ENCODE measurements at regions of chr16 and their contacts with region 1.

Region 1: GRCh38 chr16:58336332-58337089 is 41.7 kb upstream of the PRSS54 start:
- DNase-seq: peak; percentile 67 to 90 (median 81)
- ATAC-seq: peak; percentile 84
- H3K4me3 ChIP-seq: no peak overlapping the region
- H3K4me3 Mint-ChIP-seq: peak overlapping the region; percentile 52
- H3K27ac ChIP-seq: no peak overlapping the region
- H3K27ac Mint-ChIP-seq: no peak overlapping the region
- H3K4me1 ChIP-seq: peaks cover 2% of the 10 kb centered on the region
- H3K4me1 Mint-ChIP-seq: peaks cover 7% of the 10 kb centered on the region
- H3K27me3 ChIP-seq: no peaks in the 10 kb centered on the region
- H3K27me3 Mint-ChIP-seq: peaks cover 6% of the 10 kb centered on the region
- CTCF ChIP-seq: peak; percentile 95

Region 2: DNA sequence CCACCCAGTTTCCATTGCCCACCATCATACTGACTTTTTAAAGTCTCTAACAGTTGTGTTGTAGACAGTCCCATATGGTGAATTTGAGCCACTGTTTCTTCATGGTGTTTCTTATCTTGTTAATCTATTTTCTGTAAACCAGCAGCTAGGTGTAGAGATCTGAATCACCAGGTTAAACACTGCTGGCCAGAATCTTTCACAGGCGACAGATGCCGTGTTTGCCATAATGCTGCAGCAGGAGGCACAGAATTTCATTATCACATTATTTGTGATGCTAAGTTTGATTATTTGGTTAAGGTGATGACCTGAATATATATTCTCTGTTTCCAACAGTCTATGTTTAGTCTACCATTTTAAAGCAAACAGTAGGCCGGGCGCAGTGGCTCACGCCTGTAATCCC is 354.1 kb before region 1 on chr16:
- CTCF ChIA-PET with region 1: no interaction called
- POLR2A ChIA-PET with region 1: no interaction called
- intact Hi-C with region 1: no loop called
- DNase-seq: no peak
- ATAC-seq: no peak
- H3K4me3 ChIP-seq: no peak overlapping the region
- H3K4me3 Mint-ChIP-seq: no peak overlapping the region
- H3K27ac ChIP-seq: no peak overlapping the region
- H3K27ac Mint-ChIP-seq: no peak overlapping the region
- H3K4me1 ChIP-seq: peaks cover 12% of the 10 kb centered on the region
- H3K4me1 Mint-ChIP-seq: peaks cover 16% of the 10 kb centered on the region
- H3K27me3 ChIP-seq: no peaks in the 10 kb centered on the region
- H3K27me3 Mint-ChIP-seq: no peaks in the 10 kb centered on the region
- CTCF ChIP-seq: no peak

Region 3: GRCh38 chr16:58317608-58318152 is 18.8 kb before region 1 on chr16:
- CTCF ChIA-PET with region 1: interaction called, 13 read pairs
- POLR2A ChIA-PET with region 1: no interaction called
- intact Hi-C with region 1: no loop called
- DNase-seq: no peak
- ATAC-seq: no peak
- H3K4me3 ChIP-seq: no peak overlapping the region
- H3K4me3 Mint-ChIP-seq: no peak overlapping the region
- H3K27ac ChIP-seq: no peak overlapping the region
- H3K27ac Mint-ChIP-seq: no peak overlapping the region
- H3K4me1 ChIP-seq: no peaks in the 10 kb centered on the region
- H3K4me1 Mint-ChIP-seq: no peaks in the 10 kb centered on the region
- H3K27me3 ChIP-seq: no peaks in the 10 kb centered on the region
- H3K27me3 Mint-ChIP-seq: peaks cover 24% of the 10 kb centered on the region
- CTCF ChIP-seq: no peak

Region 4: GRCh38 chr16:58360041-58360634 is 23.6 kb after region 1 on chr16:
- CTCF ChIA-PET with region 1: interaction called, 14 read pairs
- POLR2A ChIA-PET with region 1: no interaction called
- intact Hi-C with region 1: no loop called
- DNase-seq: no peak
- ATAC-seq: no peak
- H3K4me3 ChIP-seq: no peak overlapping the region
- H3K4me3 Mint-ChIP-seq: no peak overlapping the region
- H3K27ac ChIP-seq: no peak overlapping the region
- H3K27ac Mint-ChIP-seq: no peak overlapping the region
- H3K4me1 ChIP-seq: no peaks in the 10 kb centered on the region
- H3K4me1 Mint-ChIP-seq: no peaks in the 10 kb centered on the region
- H3K27me3 ChIP-seq: no peaks in the 10 kb centered on the region
- H3K27me3 Mint-ChIP-seq: peaks cover 18% of the 10 kb centered on the region
- CTCF ChIP-seq: no peak

Region 5: DNA sequence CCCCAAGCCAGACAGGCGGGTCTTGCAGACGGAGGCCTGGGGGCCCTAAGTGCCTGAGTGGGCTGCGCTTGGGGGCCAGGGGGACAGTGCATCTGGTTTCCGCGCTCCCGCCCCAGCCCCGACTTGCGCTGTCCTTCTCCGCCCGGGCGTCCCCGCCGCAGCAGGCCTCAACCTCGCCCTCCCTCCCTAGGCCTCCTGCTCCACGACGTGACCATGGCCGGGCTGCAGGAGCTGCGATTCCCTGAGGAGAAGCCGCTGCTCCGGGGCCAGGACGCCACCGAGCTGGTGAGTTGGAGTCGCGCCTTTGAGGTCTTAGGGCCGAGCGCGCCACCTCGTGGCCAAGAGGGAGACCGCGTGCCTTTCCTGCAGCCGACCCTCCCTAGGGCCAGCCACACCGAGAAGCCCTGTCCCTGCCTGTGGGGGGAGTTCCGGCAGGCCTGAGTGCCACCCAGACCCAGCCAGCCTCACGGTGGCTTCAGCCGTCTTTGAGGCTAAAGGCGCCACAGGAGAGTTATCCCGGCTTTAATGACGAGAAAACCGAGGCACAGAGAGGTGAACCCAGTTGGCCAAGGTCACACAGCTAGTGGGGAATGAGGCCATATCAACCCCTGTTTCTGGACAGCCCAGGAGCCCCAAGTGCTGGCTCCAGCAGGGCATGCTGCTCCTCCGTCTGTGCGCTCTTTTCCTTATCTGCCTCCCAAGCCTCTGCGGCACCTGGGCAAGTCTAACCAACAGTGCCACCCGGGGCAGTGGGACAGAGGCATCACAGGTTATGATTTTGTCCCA is 151.2 kb after region 1 on chr16:
- CTCF ChIA-PET with region 1: interaction called, 230 read pairs
- POLR2A ChIA-PET with region 1: interaction called, 5 read pairs
- intact Hi-C with region 1: loop called (anchors 1 kb)
- DNase-seq: peak; percentile 42 to 83 (median 73)
- ATAC-seq: peak; percentile 83
- H3K4me3 ChIP-seq: no peak overlapping the region
- H3K4me3 Mint-ChIP-seq: no peak overlapping the region
- H3K27ac ChIP-seq: no peak overlapping the region
- H3K27ac Mint-ChIP-seq: no peak overlapping the region
- H3K4me1 ChIP-seq: no peaks in the 10 kb centered on the region
- H3K4me1 Mint-ChIP-seq: no peaks in the 10 kb centered on the region
- H3K27me3 ChIP-seq: peaks cover 0 to 7% of the 10 kb centered on the region in 2 experiments
- H3K27me3 Mint-ChIP-seq: peaks cover 3% of the 10 kb centered on the region
- CTCF ChIP-seq: peak; percentile 85

Region 6: GRCh38 chr16:58494981-58495520 is 158.5 kb after region 1 on chr16:
- CTCF ChIA-PET with region 1: interaction called, 230 read pairs
- POLR2A ChIA-PET with region 1: no interaction called
- intact Hi-C with region 1: no loop called
- DNase-seq: peak in 5 of 9 experiments; percentile 39 to 70 (median 61)
- ATAC-seq: peak; percentile 63
- H3K4me3 ChIP-seq: no peak overlapping the region
- H3K4me3 Mint-ChIP-seq: no peak overlapping the region
- H3K27ac ChIP-seq: no peak overlapping the region
- H3K27ac Mint-ChIP-seq: no peak overlapping the region
- H3K4me1 ChIP-seq: peaks cover 4% of the 10 kb centered on the region
- H3K4me1 Mint-ChIP-seq: peaks cover 3% of the 10 kb centered on the region
- H3K27me3 ChIP-seq: peaks cover 0 to under 1% of the 10 kb centered on the region in 2 experiments
- H3K27me3 Mint-ChIP-seq: peaks cover 18% of the 10 kb centered on the region
- CTCF ChIP-seq: no peak

Region 7: DNA sequence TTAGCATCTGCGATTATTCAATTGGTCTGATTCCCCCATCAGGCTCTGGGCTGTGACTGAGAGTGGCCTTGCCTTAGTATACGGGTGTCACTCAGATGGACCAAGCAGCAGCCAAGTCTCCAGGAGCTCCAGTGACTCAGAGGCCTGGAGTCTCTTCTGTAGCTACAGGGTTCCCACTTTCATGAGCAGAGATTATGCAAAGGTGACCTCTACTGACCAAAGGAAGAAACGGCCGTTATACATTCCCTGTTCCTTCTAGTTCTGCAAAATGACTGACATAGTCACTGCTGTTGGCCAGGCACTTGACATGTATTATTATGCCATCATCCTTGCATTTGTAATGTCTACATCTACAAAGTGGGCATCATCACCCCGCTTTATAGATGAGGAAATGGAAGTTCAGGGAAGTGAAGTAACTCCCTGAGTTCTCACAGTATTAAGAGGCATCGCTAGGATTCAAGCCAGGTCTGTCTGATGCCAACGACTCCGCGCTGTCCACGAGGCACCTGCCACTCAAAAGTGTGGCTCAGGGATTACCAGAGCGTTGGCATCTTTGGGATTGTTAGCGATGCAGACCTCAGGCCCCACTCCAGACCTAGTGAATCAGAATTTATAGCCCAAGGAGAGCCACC is 324.8 kb after region 1 on chr16:
- CTCF ChIA-PET with region 1: no interaction called
- POLR2A ChIA-PET with region 1: no interaction called
- intact Hi-C with region 1: loop called in 1 of 2 experiments (anchors 10 kb)
- DNase-seq: peak in 3 of 9 experiments; percentile 11 to 49 (median 34)
- ATAC-seq: peak; percentile 38
- H3K4me3 ChIP-seq: no peak overlapping the region
- H3K4me3 Mint-ChIP-seq: no peak overlapping the region
- H3K27ac ChIP-seq: no peak overlapping the region
- H3K27ac Mint-ChIP-seq: no peak overlapping the region
- H3K4me1 ChIP-seq: no peaks in the 10 kb centered on the region
- H3K4me1 Mint-ChIP-seq: no peaks in the 10 kb centered on the region
- H3K27me3 ChIP-seq: no peaks in the 10 kb centered on the region
- H3K27me3 Mint-ChIP-seq: no peaks in the 10 kb centered on the region
- CTCF ChIP-seq: no peak

Measured in CD8-positive, alpha-beta T cell (primary cell).